Gastrocnemius medialis (tissue), 4 donors: ENCODE measurements at regions of chr15 and their contacts with region 1.

Region 1: DNA sequence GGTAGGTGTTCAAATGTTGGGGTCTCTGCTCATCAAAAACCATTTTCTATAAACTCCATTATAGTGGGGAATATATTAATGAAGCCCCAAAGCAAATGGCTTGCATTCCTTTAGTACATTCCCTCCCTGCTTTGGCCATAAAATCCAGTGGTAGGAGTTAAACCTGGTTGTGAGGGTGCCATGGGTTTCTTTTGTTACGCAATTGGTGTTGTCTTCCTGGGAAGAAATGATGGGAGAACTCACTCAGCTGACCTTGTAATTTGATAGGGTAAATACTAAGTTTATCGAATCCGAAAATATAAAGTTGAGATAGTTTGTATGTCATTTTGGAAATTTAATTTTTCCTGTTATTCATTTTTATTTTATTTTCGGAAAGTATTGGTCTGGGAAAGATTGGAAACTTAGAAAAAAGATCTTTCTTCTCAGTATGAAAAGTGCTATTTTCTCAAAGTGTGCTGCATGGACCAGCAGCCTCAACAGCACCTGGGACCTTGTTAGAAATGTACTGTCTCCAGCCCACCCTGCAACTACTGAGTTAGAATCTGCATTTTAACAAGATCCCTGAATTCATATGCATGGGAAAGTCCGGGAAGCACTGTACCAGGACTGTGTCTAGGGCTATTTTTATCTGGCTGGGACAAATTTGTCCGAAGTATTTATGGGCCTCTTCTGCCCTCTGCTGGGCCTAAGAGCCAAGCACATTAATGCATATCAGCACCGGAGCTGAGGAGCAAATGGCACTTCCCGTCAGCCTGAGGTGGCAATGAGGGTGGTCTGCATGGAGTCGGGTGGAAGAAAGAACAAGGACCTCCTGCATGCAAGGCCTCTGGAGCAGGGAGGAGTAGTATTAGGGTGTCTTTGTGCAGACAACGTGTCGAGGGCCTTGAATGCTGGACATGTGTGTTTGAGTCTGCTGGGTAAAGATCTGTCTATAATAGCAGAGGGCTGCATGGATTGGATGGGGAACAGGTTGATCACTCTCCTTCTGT is 54.7 kb downstream of the FAM81A start:
- DNase-seq: peak; percentile 18 to 54
- ATAC-seq: peak; percentile 96 to 100
- H3K4me3 ChIP-seq: peak overlapping the region in 3 of 4 donors; percentile 12 to 32 (median 22)
- H3K27ac ChIP-seq: no peak overlapping the region
- H3K4me1 ChIP-seq: peaks cover 3 to 5% of the 10 kb centered on the region in 2 donors
- H3K27me3 ChIP-seq: no peaks in the 10 kb centered on the region
- CTCF ChIP-seq: peak; percentile 76 to 87 (median 81)
- POLR2A ChIP-seq: no peak

Region 2: GRCh38 chr15:58957101-58957973 is 535.3 kb before region 1 on chr15:
- in situ Hi-C with region 1: no loop called
- intact Hi-C with region 1: loop called (anchors 2 kb)
- DNase-seq: no peak
- ATAC-seq: peak; percentile 68 to 76
- H3K4me3 ChIP-seq: no peak overlapping the region
- H3K27ac ChIP-seq: no peak overlapping the region
- H3K4me1 ChIP-seq: no peaks in the 10 kb centered on the region
- H3K27me3 ChIP-seq: no peaks in the 10 kb centered on the region
- CTCF ChIP-seq: peak; percentile 32 to 74 (median 57)
- POLR2A ChIP-seq: no peak

Region 3: GRCh38 chr15:58987489-58988005 is 505.1 kb before region 1 on chr15 and contains the start of gene RNF111:
- in situ Hi-C with region 1: loop called in 3 of 4 experiments (anchors 5 to 10 kb)
- intact Hi-C with region 1: no loop called
- DNase-seq: peak; percentile 87 to 90
- ATAC-seq: peak; percentile 99
- H3K4me3 ChIP-seq: peak within 1 kb of the TSS; percentile 88 to 97 (median 92)
- H3K27ac ChIP-seq: peak within 1 kb of the TSS; percentile 91 to 98 (median 94)
- H3K4me1 ChIP-seq: peaks cover 16 to 35% of the 10 kb centered on the region in 2 donors
- H3K27me3 ChIP-seq: no peaks in the 10 kb centered on the region
- CTCF ChIP-seq: no peak
- POLR2A ChIP-seq: peak; percentile 82 to 85
- total RNA-seq, gene RNF111: 14.5 to 18.4 (median 15.8) TPM

Region 4: DNA sequence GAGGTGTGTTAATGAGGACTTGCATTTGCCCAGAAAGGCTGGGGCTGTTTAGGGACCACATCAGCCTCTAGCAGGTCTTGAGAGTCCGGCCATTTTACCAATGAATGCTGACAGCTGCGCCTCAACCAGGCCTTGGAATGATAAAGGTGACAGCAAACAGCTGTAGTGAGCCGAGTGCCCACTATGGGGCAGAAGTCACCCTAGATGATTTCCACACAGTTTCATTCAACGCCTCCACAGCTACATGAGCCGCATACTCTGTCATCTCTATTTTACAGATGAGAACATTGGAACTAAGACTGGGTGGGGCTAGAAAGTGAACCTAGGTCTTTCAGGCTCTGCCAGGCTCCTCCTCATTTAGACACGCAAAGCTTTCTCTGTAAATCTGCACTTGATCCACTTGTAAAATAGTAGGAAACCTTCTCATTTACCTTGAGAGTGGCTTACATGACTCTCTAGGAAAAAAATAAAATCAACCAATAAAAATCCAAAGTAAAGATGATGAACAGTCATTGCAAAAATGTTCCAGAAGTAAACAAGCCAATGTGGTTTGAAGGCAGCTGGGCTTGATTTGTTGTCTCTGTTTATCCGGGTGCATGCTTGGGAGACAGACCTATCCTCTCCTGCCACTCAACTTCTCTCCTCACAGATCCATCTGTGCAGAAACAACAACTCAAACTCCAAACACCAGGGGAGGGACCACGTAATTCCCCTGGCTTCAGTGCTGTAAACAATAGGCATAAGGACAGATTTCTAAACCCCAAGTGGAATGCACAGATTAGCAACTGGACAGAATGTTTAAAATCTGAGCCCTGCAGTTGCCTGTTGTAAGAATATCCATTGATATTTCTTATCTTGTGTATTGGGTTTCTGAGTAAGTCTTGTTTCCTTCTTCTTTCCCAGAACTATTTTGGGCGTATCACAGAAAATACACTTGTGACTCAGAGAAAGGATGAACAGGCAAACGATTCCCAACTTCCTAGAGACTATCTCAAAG is 317.6 kb before region 1 on chr15:
- in situ Hi-C with region 1: loop called in 2 of 4 experiments (anchors 10 to 25 kb)
- intact Hi-C with region 1: loop called (anchors 1 kb)
- DNase-seq: peak in 1 of 2 donors; percentile 39
- ATAC-seq: peak; percentile 45 to 74
- H3K4me3 ChIP-seq: no peak overlapping the region
- H3K27ac ChIP-seq: no peak overlapping the region
- H3K4me1 ChIP-seq: peaks cover 4 to 14% of the 10 kb centered on the region in 2 donors
- H3K27me3 ChIP-seq: no peaks in the 10 kb centered on the region
- CTCF ChIP-seq: peak; percentile 21 to 50 (median 47)
- POLR2A ChIP-seq: no peak

Region 5: DNA sequence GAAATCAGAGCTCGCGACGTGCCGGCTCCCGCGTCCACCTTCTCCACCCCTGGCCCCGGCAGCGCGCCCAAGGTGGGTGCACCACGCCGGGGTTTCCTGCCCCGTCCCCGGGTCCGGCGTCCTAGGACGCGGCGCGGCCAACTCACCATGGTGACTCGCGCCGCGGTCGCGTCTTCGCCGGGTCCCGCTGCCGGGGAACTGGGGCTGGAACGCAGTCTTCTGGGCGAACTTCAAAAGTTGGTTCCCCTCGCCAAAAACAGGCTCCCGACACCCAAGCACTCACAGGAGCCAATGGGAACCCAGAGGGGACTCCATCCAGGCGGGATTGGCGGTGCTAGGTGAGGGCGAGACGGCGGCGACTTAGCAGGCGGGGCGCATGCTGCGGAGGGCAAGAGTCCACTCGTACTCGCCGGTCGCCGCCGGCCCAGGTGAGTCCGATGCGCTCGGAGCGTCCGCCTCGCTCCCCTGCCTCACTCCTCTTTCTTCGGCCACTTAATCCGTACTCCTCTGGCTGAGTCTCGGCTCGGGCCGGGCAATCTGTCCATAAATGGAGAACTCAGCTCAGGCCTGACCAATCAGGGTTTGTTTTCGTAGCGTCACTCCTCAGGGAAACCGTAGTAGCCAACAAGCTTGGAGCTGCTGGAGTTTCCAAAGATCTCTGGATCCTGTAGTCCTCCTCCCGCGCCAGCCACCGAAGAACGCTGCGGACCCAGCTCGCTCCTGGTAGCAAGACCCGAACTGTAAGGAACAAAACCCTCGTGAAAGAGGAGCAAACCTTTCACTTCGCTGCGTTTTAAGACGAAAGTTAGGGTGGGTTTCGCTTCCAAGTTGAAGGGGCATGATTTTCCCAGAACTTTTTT is 120.1 kb before region 1 on chr15 and contains the start of gene MYO1E:
- in situ Hi-C with region 1: no loop called
- intact Hi-C with region 1: loop called (anchors 5 kb)
- DNase-seq: peak; percentile 91 to 95
- ATAC-seq: peak; percentile 98
- H3K4me3 ChIP-seq: peak within 1 kb of the TSS; percentile 76 to 94 (median 88)
- H3K27ac ChIP-seq: peak within 1 kb of the TSS; percentile 93 to 97 (median 97)
- H3K4me1 ChIP-seq: peaks cover 6 to 15% of the 10 kb centered on the region in 2 donors
- H3K27me3 ChIP-seq: no peaks in the 10 kb centered on the region
- CTCF ChIP-seq: no peak
- POLR2A ChIP-seq: peak; percentile 88 to 98
- total RNA-seq, gene MYO1E: 12.8 to 39.6 (median 30.7) TPM